ENCODE measurements at regions of chr12 and their contacts with region 1.

Region 1: DNA sequence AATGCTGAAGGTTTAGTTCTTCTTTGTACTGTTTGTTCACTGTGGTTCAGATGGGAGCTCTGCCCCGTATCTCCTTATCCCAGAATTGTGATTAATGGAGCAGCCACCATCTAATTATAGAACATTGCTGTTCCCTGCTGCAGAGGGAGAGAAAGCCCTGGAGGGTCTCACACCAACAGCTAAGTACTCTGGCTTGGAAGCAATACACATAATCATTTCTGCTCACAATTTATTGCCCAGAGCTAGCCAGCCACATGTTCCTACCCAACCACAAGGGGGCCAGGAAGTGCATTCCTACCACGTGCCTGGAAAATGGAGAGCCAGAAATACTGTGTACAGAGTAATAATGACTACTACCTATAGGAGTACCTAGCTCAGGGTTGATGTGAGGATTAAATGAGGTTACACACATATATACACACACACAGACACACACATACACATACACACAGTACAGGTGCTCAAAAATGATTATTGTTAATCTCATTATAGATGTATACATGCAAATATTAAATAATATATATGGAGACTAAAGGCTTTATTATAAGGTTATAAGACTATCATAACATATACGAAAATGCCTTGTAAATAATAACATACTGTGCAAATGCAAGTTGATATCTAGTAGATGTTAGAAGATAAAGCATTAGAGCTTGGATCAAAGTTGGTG is 22.3 kb downstream of the MSRB3 start:
- DNase-seq: peak in 2 of 3 donors; percentile 58 to 66
- H3K4me3 ChIP-seq: peak overlapping the region in 1 of 7 experiments; percentile 12
- H3K27ac ChIP-seq: no peak overlapping the region
- H3K4me1 ChIP-seq: peaks cover 3 to 30% (median 7%) of the 10 kb centered on the region in 4 experiments
- H3K27me3 ChIP-seq: no peaks in the 10 kb centered on the region

Region 2: GRCh38 chr12:65282840-65283239 is 18.0 kb before region 1 on chr12:
- CTCF ChIA-PET with region 1: interaction called, 32 read pairs
- POLR2A ChIA-PET with region 1: no interaction called
- DNase-seq: peak in 1 of 3 donors; percentile 47
- H3K4me3 ChIP-seq: peak overlapping the region in 2 of 7 experiments; percentile 57 to 60
- H3K27ac ChIP-seq: peak overlapping the region in 1 of 2 experiments; percentile 33
- H3K4me1 ChIP-seq: peaks cover 32 to 74% (median 68%) of the 10 kb centered on the region in 4 experiments
- H3K27me3 ChIP-seq: no peaks in the 10 kb centered on the region

Region 3: DNA sequence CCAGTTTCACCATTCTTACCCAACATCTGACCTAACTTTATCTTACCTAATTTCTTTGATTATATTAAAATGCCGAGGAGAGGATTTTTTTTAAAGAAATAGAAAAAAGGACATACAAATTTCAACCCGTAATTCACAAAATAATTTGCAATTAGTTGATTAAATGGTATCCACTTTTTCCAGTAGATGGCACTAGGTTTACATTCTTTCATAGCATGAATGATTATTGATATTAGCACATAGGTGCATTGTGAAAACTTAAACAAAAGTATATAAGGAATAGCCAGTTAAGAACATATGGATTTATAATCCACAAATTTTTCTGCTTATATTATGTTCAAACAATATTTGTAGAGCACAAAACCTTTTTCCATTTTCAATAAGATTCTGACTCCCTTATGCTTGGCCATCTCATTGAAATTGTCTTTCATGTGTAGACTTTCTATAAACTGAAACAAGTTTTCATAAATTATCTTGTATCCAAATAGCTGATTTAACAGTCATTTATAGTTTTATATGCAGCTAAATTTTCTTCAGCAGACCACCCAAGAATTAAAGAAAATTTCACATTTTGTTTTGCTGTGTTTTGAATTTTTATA is 13.0 kb after region 1 on chr12:
- CTCF ChIA-PET with region 1: interaction called, 11 read pairs
- POLR2A ChIA-PET with region 1: no interaction called
- DNase-seq: peak; percentile 30 to 52 (median 46)
- H3K4me3 ChIP-seq: no peak overlapping the region
- H3K27ac ChIP-seq: no peak overlapping the region
- H3K4me1 ChIP-seq: peaks cover 0 to 12% (median under 1%) of the 10 kb centered on the region in 4 experiments
- H3K27me3 ChIP-seq: no peaks in the 10 kb centered on the region

Measured in common myeloid progenitor, CD34-positive (primary cell).